Adrenal gland (tissue), 19 donors: ENCODE measurements at regions of chr22 and their contacts with region 1.

Region 1: GRCh38 chr22:39170825-39171622 is 18.5 kb upstream of the CBX7 start:
- DNase-seq: peak; percentile 72 to 91 (median 84)
- H3K4me3 ChIP-seq: no peak overlapping the region
- H3K27ac ChIP-seq: no peak overlapping the region
- H3K4me1 ChIP-seq: peaks cover 21 to 35% of the 10 kb centered on the region in 2 donors
- H3K27me3 ChIP-seq: no peaks in the 10 kb centered on the region
- CTCF ChIP-seq: peak; percentile 95 to 98 (median 98)
- POLR2A ChIP-seq: no peak

Region 2: DNA sequence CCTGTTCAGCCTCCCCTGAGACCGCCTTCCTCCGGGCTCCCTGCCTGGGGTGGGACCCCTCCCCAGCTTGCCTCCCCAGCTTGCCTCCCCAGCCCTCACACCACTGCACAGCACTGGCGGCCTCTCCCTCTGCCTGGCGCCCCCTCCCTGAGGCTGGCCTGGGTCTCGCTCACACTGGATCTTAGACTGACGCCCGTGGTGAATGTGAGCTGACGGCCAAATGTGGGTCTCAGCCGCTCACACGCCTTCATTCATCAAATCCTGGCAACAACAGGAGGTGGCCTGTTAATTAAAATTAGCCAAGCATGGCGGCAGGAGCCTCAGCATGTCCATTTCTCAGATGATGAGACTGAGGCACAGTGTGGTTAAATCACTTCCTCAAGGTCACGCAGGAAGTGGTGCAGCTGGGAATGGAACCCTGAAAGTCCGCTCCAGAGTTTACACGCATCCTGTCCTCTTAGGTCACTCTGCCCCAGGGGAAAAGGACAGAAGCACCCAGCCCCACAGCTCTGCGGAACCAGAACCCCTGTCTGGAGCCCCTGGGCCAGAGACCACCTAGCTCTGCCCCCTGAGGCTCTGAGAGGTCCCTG is 128.7 kb after region 1 on chr22:
- intact Hi-C with region 1: loop called in 1 of 2 experiments (anchors 5 kb)
- DNase-seq: peak in 3 of 7 donors; percentile 46 to 72 (median 61)
- H3K4me3 ChIP-seq: no peak overlapping the region
- H3K27ac ChIP-seq: peak overlapping the region in 4 of 5 donors; percentile 43 to 83 (median 56)
- H3K4me1 ChIP-seq: peaks cover 0 to 18% of the 10 kb centered on the region in 2 donors
- H3K27me3 ChIP-seq: no peaks in the 10 kb centered on the region
- CTCF ChIP-seq: no peak
- POLR2A ChIP-seq: no peak

Region 3: DNA sequence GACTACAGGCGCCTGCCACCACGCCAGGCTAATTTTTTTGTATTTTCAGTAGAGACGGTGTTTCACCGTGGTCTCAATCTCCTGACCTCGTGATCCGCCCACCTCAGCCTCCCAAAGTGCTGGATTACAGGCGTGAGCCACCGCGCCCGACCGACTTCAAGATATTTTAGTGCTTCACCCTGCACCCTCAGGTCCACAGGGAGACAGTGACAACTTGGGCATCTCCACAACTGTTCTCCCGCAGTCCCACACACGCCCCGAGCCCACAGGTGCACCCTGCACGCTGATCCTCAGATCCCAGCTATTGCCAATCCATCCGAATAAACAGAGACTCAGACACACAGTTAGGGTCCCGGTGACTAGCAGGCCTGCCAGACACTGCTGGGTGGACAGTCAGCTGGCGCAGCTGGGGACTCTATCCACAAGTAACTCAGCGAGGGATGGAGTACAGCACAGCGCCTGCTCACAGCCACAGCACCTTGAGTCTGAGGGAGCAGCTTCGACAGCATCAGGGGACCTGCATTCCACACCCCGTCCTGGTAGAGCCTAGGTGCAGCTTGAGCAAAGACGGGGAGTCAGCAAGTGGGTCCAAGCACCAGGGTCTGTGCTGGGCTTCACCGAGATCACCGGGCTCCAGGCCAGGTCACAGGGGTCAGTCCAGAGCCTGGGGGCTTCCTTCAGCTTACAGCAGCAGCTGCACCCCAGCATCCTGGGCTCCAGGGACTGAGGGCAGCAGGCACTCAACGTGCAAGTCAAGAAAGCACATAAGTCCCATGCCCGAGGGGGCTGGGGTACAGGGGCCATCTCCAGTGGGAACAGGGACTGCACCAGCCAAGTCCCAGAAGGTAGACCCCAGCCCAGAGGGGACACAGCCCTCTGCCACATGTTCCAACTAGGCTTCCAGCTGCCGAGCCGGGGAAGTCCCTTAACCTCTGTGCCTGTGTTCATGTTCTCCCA is 140.7 kb after region 1 on chr22:
- intact Hi-C with region 1: loop called (anchors 2 kb)
- DNase-seq: peak in 2 of 7 donors; percentile 22 to 66
- H3K4me3 ChIP-seq: no peak overlapping the region
- H3K27ac ChIP-seq: no peak overlapping the region
- H3K4me1 ChIP-seq: peaks cover 41 to 56% of the 10 kb centered on the region in 2 donors
- H3K27me3 ChIP-seq: no peaks in the 10 kb centered on the region
- CTCF ChIP-seq: no peak
- POLR2A ChIP-seq: no peak

Region 4: GRCh38 chr22:39319270-39320022 is 148.4 kb after region 1 on chr22 and contains the start of gene RPL3:
- intact Hi-C with region 1: loop called in 1 of 2 experiments (anchors 2 kb)
- DNase-seq: peak; percentile 95 to 98 (median 97)
- H3K4me3 ChIP-seq: peak within 1 kb of the TSS; percentile 49 to 93 (median 76)
- H3K27ac ChIP-seq: peak within 1 kb of the TSS; percentile 98 to 99 (median 99)
- H3K4me1 ChIP-seq: peaks cover 38% of the 10 kb centered on the region in 2 donors
- H3K27me3 ChIP-seq: no peaks in the 10 kb centered on the region
- CTCF ChIP-seq: peak in 3 of 6 experiments; percentile 7 to 30 (median 29)
- POLR2A ChIP-seq: peak; percentile 89 to 95
- total RNA-seq, gene RPL3: 1,374 to 2,518 (median 1,917) TPM

Region 5: DNA sequence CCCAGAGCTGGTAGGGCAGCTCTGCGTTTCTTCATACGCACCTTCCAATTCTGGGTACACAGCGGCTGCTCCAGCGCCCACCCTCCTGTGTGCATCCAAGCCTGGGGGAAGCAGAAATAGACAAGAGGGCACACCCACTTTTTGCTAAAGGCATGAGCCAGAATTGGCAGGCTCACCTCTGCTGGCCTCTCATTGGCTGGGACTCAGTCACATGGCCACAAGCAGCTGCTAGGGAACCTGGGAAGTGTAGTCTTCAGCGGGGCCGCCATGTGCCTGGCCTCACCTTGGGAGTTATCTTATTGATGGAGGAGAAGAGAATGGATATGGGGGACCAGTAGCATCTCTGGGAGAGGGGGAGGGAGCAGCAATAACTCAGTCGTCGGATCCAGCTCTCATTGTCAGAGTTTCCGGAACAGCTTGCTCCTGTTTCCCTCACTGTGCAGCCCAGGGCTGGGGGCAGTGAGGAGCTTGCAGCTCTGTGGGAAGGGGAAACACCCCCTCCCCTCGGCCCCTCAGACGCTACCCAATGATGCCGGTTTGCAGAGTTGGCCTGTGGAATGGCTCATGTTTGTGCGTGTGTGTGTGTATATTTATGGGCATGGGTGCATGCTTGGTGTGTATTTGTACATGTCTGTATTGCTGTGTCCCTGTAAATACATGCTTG is 319.2 kb after region 1 on chr22:
- intact Hi-C with region 1: loop called in 1 of 2 experiments (anchors 10 kb)
- DNase-seq: peak; percentile 78 to 93 (median 87)
- H3K4me3 ChIP-seq: no peak overlapping the region
- H3K27ac ChIP-seq: no peak overlapping the region
- H3K4me1 ChIP-seq: peaks cover 0 to 5% of the 10 kb centered on the region in 2 donors
- H3K27me3 ChIP-seq: no peaks in the 10 kb centered on the region
- CTCF ChIP-seq: no peak
- POLR2A ChIP-seq: no peak

Region 6: GRCh38 chr22:39520054-39520891 is 349.2 kb after region 1 on chr22 and contains the start of gene ATF4:
- intact Hi-C with region 1: loop called in 1 of 2 experiments (anchors 10 kb)
- DNase-seq: peak; percentile 97 to 99 (median 99)
- H3K4me3 ChIP-seq: peak within 1 kb of the TSS; percentile 76 to 100 (median 92)
- H3K27ac ChIP-seq: peak within 1 kb of the TSS; percentile 94 to 99 (median 98)
- H3K4me1 ChIP-seq: peaks cover 33 to 50% of the 10 kb centered on the region in 2 donors
- H3K27me3 ChIP-seq: no peaks in the 10 kb centered on the region
- CTCF ChIP-seq: no peak
- POLR2A ChIP-seq: peak; percentile 97 to 98
- total RNA-seq, gene ATF4: 207 to 498 (median 323) TPM